CD4-positive, alpha-beta T cell (primary cell): ENCODE measurements at regions of chr17 and their contacts with region 1.

Region 1: DNA sequence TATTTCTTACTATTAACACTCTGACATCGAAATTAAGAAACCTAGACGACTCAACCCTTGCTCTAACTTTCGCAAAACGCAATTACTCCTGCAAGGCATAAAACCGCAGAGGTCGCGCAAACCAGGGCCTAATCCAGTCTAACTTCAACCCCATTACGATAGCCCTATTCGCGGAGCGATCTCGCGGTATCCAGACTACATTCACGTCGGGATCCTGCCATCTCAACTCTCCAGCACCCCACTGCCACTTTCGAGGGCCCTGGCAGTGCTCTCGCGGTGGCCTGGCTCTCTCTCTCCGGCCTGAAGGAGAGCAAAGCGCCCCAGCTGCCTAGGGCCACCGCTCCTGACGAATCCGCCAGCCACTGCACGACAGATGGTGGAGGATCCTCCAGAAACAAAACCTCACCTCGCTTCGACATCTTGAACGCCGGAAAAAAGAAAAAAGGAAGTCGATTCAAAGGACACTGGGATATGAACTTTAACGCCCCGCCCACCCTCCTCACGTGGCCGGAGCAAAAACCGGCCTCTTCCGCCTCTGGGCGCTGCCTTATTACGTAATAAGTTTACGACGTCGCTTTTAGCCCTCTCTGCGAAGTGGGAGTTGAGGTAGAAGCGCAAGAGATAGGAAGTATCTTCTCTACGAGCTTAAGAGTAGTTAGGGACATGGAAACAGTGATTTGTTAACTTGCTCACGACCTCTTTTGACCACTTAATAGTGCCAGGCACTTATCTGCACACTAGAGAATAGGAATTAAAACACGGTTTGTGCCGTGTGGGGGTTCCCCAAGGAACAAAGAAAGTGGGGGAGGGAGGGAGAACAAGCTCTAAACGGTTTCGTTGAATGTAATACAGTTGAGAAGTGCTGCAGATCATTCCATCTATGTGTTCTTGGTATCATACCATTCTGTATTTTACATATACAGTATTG is at the start of gene RPL23:
- DNase-seq: peak; percentile 77 to 97 (median 86)
- ATAC-seq: peak; percentile 80
- H3K4me3 ChIP-seq: peak within 1 kb of the TSS; percentile 67
- H3K4me3 Mint-ChIP-seq: peak within 1 kb of the TSS; percentile 90
- H3K27ac ChIP-seq: peak within 1 kb of the TSS; percentile 86 to 92
- H3K27ac Mint-ChIP-seq: peak within 1 kb of the TSS; percentile 96
- H3K4me1 ChIP-seq: peaks cover 29% of the 10 kb centered on the region
- H3K4me1 Mint-ChIP-seq: peaks cover 39% of the 10 kb centered on the region
- H3K27me3 ChIP-seq: no peaks in the 10 kb centered on the region
- H3K27me3 Mint-ChIP-seq: no peaks in the 10 kb centered on the region
- CTCF ChIP-seq: no peak
- total RNA-seq, gene RPL23: 2,293 to 2,296 TPM

Region 2: DNA sequence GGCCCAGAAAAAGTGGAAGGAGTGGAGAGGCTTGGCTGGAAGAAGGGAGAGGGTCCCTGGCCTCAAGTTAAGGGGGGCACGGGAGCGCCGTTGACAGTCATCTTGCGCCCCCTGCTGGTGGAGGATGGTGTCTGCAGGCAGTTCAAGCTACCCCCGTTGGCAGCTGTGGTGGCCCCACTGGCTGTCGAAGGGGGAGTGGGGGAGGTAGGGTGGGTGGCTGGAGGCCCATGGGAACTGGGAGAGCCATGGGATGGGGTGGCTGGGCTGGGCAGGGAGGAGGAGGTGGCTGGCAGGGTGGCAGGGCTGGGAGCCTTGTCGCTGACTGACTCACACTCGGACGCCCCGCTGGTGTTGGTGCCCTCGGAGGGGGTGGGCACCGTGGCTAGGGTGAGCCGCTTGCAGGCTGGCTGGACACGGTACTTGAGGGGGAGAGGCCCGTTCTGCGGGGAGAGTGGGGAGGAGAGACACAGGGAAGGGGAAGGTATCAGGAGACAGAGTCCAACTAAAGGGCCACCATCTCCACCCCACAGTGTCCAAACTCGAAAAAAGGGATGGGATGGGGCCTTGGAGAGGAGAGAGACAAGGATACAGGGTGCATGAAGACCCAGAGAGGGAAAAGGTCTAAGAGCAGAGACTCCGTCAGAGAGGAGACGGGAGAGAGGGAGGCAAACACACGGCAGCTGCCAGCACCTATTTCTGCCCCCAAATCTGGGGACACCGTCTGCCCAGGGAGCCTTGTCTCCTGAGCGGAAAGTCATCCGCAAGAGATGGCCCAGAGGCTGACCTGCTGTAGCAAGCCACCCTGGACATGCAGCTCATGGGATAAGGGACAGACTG is 118.2 kb before region 1 on chr17:
- CTCF ChIA-PET with region 1: no interaction called
- POLR2A ChIA-PET with region 1: no interaction called
- intact Hi-C with region 1: no loop called
- DNase-seq: peak; percentile 63 to 83 (median 72)
- ATAC-seq: peak; percentile 46
- H3K4me3 ChIP-seq: no peak overlapping the region
- H3K4me3 Mint-ChIP-seq: no peak overlapping the region
- H3K27ac ChIP-seq: no peak overlapping the region
- H3K27ac Mint-ChIP-seq: no peak overlapping the region
- H3K4me1 ChIP-seq: peaks cover 45% of the 10 kb centered on the region
- H3K4me1 Mint-ChIP-seq: peaks cover 50% of the 10 kb centered on the region
- H3K27me3 ChIP-seq: no peaks in the 10 kb centered on the region
- H3K27me3 Mint-ChIP-seq: no peaks in the 10 kb centered on the region
- CTCF ChIP-seq: peak; percentile 93

Region 3: DNA sequence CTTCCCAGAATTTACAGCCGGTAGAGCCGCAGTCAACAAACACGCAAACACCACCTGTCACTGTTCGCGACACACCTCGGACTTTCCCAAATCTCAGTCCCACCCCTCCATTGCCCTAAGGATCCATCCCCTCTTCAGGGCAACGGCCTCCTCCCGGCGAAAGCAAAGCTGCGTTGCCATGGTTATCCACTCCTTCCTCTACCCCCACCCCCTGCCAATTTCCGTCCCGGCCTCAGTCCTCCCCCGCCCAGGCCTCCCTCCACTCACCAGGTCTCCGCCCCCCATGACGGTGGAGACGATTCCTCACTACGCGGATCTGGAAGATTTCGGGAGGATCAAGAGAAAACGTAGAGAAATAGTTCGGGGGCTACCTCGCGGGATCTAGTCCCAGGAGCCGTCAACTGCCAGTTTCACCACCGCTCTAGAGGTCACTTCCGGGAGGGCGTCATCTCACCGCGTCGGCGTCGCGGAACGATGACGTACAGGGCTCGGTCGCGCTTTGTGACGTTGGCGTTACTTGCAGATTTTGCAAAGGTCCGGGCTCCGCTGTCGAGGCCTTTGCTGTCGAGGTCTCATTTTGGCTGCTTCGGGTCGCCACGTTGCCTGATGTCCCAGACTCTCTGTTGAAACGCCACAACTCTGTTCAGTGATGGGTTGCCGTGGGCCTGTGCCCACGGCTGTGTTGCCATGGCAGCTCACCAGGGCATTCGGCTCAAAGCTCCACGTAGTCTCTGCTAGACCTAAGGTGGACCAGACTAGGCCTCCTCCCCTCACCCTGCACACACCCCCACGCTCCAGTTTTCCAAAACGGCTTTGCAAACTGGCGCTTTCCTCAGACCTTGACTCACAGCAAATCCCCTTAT is 28.4 kb before region 1 on chr17 and contains the start of gene CWC25:
- CTCF ChIA-PET with region 1: interaction called, 5 read pairs
- POLR2A ChIA-PET with region 1: interaction called, 55 read pairs
- intact Hi-C with region 1: loop called (anchors 1 kb)
- DNase-seq: peak; percentile 90 to 100 (median 94)
- ATAC-seq: peak; percentile 81
- H3K4me3 ChIP-seq: peak within 1 kb of the TSS; percentile 66
- H3K4me3 Mint-ChIP-seq: peak within 1 kb of the TSS; percentile 99
- H3K27ac ChIP-seq: peak within 1 kb of the TSS; percentile 94 to 95
- H3K27ac Mint-ChIP-seq: peak within 1 kb of the TSS; percentile 100
- H3K4me1 ChIP-seq: peaks cover 25% of the 10 kb centered on the region
- H3K4me1 Mint-ChIP-seq: peaks cover 37% of the 10 kb centered on the region
- H3K27me3 ChIP-seq: no peaks in the 10 kb centered on the region
- H3K27me3 Mint-ChIP-seq: peaks cover 5% of the 10 kb centered on the region
- CTCF ChIP-seq: no peak
- total RNA-seq, gene CWC25: 63.0 to 63.3 TPM

Region 4: GRCh38 chr17:38841141-38841485 is 12.4 kb before region 1 on chr17:
- CTCF ChIA-PET with region 1: no interaction called
- POLR2A ChIA-PET with region 1: interaction called, 19 read pairs
- intact Hi-C with region 1: no loop called
- DNase-seq: peak in 5 of 14 experiments; percentile 6 to 31 (median 27)
- ATAC-seq: peak; percentile 54
- H3K4me3 ChIP-seq: peak overlapping the region; percentile 41
- H3K4me3 Mint-ChIP-seq: peak overlapping the region; percentile 79
- H3K27ac ChIP-seq: no peak overlapping the region
- H3K27ac Mint-ChIP-seq: no peak overlapping the region
- H3K4me1 ChIP-seq: no peaks in the 10 kb centered on the region
- H3K4me1 Mint-ChIP-seq: no peaks in the 10 kb centered on the region
- H3K27me3 ChIP-seq: no peaks in the 10 kb centered on the region
- H3K27me3 Mint-ChIP-seq: no peaks in the 10 kb centered on the region
- CTCF ChIP-seq: no peak

Region 5: DNA sequence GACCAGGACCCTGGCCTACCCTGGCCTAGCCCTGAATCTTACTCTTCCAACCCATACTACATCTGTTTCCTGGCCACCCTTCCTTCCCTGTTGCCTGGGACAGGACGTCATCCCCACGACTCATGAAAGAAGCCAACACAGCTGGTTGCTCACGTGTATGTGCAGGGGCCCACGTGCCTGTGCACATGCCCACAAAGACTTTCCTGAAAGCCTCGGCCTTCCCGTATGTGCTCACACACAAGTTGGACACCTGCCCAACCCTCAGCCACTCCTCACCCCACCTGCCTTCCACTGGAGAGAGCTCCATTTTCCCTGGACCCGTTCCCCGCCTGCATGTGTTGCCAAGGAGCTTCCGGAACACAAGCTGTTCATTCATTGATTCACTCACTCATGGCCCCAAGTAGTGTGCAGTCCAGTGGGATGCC is 290.9 kb after region 1 on chr17:
- CTCF ChIA-PET with region 1: no interaction called
- POLR2A ChIA-PET with region 1: no interaction called
- intact Hi-C with region 1: no loop called
- DNase-seq: no peak
- ATAC-seq: no peak
- H3K4me3 ChIP-seq: no peak overlapping the region
- H3K4me3 Mint-ChIP-seq: no peak overlapping the region
- H3K27ac ChIP-seq: no peak overlapping the region
- H3K27ac Mint-ChIP-seq: no peak overlapping the region
- H3K4me1 ChIP-seq: peaks cover 10% of the 10 kb centered on the region
- H3K4me1 Mint-ChIP-seq: peaks cover 22% of the 10 kb centered on the region
- H3K27me3 ChIP-seq: no peaks in the 10 kb centered on the region
- H3K27me3 Mint-ChIP-seq: no peaks in the 10 kb centered on the region
- CTCF ChIP-seq: no peak